CD4-positive, alpha-beta memory T cell (primary cell): ENCODE measurements at regions of chr10 and their contacts with region 1.

Region 1: GRCh38 chr10:119139464-119140067 is 25.9 kb downstream of the SFXN4 start:
- DNase-seq: peak in 4 of 5 donors; percentile 34 to 45 (median 42)
- H3K4me3 ChIP-seq: no peak overlapping the region
- H3K4me3 Mint-ChIP-seq: no peak overlapping the region
- H3K27ac ChIP-seq: no peak overlapping the region
- H3K27ac Mint-ChIP-seq: peak overlapping the region in 6 of 7 donors; percentile 14 to 88 (median 64)
- H3K4me1 ChIP-seq: peaks cover 4% of the 10 kb centered on the region
- H3K4me1 Mint-ChIP-seq: peaks cover 5 to 10% (median 9%) of the 10 kb centered on the region in 4 donors
- H3K27me3 ChIP-seq: no peaks in the 10 kb centered on the region
- H3K27me3 Mint-ChIP-seq: no peaks in the 10 kb centered on the region

Region 2: GRCh38 chr10:118882741-118883140 is 256.8 kb before region 1 on chr10:
- CTCF ChIA-PET with region 1: no interaction called
- POLR2A ChIA-PET with region 1: no interaction called
- intact Hi-C with region 1: no loop called
- DNase-seq: no peak
- H3K4me3 ChIP-seq: no peak overlapping the region
- H3K4me3 Mint-ChIP-seq: no peak overlapping the region
- H3K27ac ChIP-seq: no peak overlapping the region
- H3K27ac Mint-ChIP-seq: no peak overlapping the region
- H3K4me1 ChIP-seq: no peaks in the 10 kb centered on the region
- H3K4me1 Mint-ChIP-seq: no peaks in the 10 kb centered on the region
- H3K27me3 ChIP-seq: no peaks in the 10 kb centered on the region
- H3K27me3 Mint-ChIP-seq: peaks cover 0 to 7% of the 10 kb centered on the region in 2 donors

Region 3: DNA sequence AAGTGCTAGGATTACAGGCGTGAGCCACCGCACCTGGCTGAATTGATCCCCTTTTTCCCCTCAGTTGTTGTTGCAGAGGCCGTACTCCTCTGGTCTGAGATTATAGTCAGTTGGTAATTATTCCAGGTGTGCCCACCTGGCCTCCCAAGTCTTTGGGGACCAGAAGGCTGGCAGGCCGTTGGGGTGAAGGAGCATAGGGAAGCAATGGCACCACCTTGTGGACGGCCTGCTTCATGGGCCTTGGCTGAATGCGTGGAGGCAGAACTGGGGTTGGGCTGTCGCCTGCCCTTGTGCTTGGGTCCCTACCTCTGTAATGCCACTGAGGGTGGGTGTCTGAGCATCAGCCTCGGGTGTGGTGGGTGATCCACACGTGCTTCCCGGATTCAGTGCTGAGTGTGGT is 277.3 kb after region 1 on chr10:
- CTCF ChIA-PET with region 1: interaction called, 4 read pairs
- POLR2A ChIA-PET with region 1: no interaction called
- intact Hi-C with region 1: loop called (anchors 2 kb)
- DNase-seq: peak; percentile 54 to 65 (median 62)
- H3K4me3 ChIP-seq: no peak overlapping the region
- H3K4me3 Mint-ChIP-seq: no peak overlapping the region
- H3K27ac ChIP-seq: no peak overlapping the region
- H3K27ac Mint-ChIP-seq: peak overlapping the region in 1 of 7 donors; percentile 12
- H3K4me1 ChIP-seq: no peaks in the 10 kb centered on the region
- H3K4me1 Mint-ChIP-seq: peaks cover 0 to 2% (median under 1%) of the 10 kb centered on the region in 4 donors
- H3K27me3 ChIP-seq: no peaks in the 10 kb centered on the region
- H3K27me3 Mint-ChIP-seq: no peaks in the 10 kb centered on the region

Region 4: DNA sequence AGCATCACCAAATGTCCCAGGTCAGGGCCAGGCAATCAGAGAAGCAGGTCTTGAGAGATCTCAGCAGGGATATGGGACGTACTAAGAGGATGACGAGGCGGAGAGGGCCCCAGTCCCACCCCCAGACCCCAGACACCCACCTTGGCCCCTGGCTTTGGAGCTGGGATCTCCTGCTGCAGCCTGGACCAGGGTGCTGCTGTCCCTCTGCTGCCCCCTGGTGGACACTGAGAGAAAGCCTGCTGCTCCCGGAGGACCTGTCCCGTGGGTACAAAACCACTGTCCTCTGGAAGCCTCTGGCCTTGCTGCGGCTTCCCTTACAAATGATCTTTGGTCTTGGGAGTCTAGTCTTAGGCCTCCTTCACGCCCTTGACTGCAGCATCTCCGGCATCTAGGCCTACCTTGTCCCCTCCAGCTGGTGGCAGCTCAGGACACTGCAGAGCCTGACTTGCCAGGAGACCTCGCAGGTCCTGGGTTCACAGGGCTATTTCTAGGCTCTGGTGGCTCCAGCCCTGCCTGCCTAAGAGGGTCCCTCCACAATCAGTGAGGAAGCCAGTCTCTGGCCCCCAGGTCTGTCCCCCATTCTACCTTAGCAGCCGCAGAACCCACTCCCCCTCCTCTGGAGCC is 305.9 kb after region 1 on chr10:
- CTCF ChIA-PET with region 1: no interaction called
- POLR2A ChIA-PET with region 1: no interaction called
- intact Hi-C with region 1: loop called (anchors 1 kb)
- DNase-seq: peak; percentile 72 to 79 (median 76)
- H3K4me3 ChIP-seq: no peak overlapping the region
- H3K4me3 Mint-ChIP-seq: peak overlapping the region in 1 of 8 donors; percentile 22
- H3K27ac ChIP-seq: no peak overlapping the region
- H3K27ac Mint-ChIP-seq: peak overlapping the region in 3 of 7 donors; percentile 43 to 65 (median 48)
- H3K4me1 ChIP-seq: peaks cover 6% of the 10 kb centered on the region
- H3K4me1 Mint-ChIP-seq: peaks cover 1 to 13% (median 8%) of the 10 kb centered on the region in 4 donors
- H3K27me3 ChIP-seq: no peaks in the 10 kb centered on the region
- H3K27me3 Mint-ChIP-seq: no peaks in the 10 kb centered on the region